ENCODE measurements at regions of chr9 and their contacts with region 1.

Region 1: DNA sequence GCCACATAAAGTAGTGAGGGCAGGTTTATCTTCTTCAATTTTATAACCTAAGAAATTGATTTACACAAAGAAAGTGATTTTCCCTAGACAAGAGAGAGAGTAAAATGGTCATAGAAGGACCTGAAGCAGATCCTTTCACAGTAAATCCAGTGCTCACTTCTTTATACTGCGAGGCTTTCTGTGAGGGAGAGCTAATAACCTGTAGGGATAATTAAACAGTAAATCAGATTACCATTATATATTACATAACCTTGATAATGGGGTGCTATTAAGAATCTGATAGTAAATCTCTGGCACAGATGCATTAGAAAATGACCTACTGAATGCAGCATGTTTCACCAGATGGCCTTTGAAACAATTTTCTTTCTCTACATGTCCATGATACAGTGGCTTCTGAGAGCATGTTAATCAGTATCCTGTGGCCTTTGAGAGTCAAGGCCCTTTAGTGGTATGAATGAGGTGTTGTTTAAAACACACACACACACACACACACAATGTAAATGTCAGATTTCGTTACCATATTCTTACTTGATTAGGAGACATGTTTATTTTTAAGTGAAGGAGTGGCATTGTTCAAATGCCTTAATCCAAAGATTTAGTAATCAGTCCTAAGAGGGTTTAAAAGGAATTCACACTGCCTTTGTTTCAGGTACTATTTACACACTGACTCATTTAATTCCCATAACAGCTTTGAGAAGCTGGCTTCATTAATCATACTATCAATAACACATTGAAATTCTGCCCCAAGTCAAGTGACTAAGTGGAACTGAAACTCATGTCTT is 124.7 kb downstream of the ALDH1A1 start:
- DNase-seq: no peak
- ATAC-seq: no peak
- H3K4me3 ChIP-seq: no peak overlapping the region
- H3K27ac ChIP-seq: no peak overlapping the region
- H3K4me1 ChIP-seq: no peaks in the 10 kb centered on the region
- H3K27me3 ChIP-seq: no peaks in the 10 kb centered on the region

Region 2: DNA sequence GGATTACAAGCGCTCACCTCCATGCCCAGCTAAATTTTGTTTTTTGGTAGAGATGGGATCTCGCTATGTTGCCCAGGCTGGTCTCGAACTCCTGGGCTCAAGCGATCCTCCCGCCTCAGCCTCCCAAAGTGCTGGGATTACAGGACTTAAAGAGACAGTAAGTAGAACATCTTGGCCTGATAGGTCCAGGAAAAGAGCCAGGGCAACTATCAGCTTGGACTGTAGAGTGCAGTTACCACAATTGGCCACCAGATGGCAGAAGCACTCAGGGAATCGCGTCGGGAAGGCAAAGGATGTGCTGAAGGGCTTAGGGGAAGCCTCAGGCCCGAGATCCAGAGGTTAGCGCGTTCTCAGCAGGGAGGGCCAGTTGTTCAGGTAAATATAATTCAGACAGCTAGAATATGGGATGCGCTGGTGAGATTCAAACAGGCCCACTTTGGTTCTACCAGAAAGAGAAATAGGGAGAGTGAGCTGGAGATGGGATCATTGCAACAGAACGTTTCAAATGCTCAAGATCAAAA is 789.2 kb before region 1 on chr9:
- intact Hi-C with region 1: loop called in 1 of 4 experiments (anchors 10 kb)
- DNase-seq: peak; percentile 63 to 83 (median 82)
- ATAC-seq: peak; percentile 85 to 89
- H3K4me3 ChIP-seq: no peak overlapping the region
- H3K27ac ChIP-seq: no peak overlapping the region
- H3K4me1 ChIP-seq: peaks cover 2% of the 10 kb centered on the region
- H3K27me3 ChIP-seq: no peaks in the 10 kb centered on the region

Region 3: GRCh38 chr9:72280913-72281500 is 547.1 kb before region 1 on chr9:
- intact Hi-C with region 1: loop called in 1 of 4 experiments (anchors 2 kb)
- DNase-seq: peak; percentile 66 to 84 (median 81)
- ATAC-seq: peak; percentile 86 to 88
- H3K4me3 ChIP-seq: no peak overlapping the region
- H3K27ac ChIP-seq: no peak overlapping the region
- H3K4me1 ChIP-seq: no peaks in the 10 kb centered on the region
- H3K27me3 ChIP-seq: no peaks in the 10 kb centered on the region

Region 4: GRCh38 chr9:72292256-72292682 is 535.9 kb before region 1 on chr9:
- intact Hi-C with region 1: loop called in 2 of 4 experiments (anchors 5 to 10 kb)
- DNase-seq: no peak
- ATAC-seq: peak; percentile 41 to 48
- H3K4me3 ChIP-seq: no peak overlapping the region
- H3K27ac ChIP-seq: no peak overlapping the region
- H3K4me1 ChIP-seq: no peaks in the 10 kb centered on the region
- H3K27me3 ChIP-seq: no peaks in the 10 kb centered on the region

Region 5: DNA sequence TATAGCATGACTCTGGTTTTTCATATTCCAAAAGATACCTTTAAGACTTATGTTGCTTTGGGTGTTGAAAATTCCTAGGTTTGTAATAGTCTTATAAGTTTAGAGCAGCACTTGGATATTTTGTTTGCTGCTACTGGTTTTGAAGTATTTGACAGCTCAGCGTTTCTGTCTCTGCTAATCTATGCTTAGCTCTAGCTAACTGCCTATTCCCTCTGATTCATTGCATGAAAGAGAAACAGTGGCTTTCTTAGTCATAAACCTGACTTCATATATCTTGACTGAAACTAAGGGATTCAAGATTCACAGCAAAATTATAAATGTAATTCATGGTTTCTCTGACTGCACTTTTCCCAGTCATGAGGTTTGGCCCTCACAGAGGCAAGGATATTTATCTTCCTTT is 287.9 kb after region 1 on chr9:
- intact Hi-C with region 1: no loop called
- DNase-seq: no peak
- ATAC-seq: no peak
- H3K4me3 ChIP-seq: no peak overlapping the region
- H3K27ac ChIP-seq: no peak overlapping the region
- H3K4me1 ChIP-seq: no peaks in the 10 kb centered on the region
- H3K27me3 ChIP-seq: no peaks in the 10 kb centered on the region

Region 6: GRCh38 chr9:73595036-73595545 is 767.0 kb after region 1 on chr9:
- intact Hi-C with region 1: no loop called
- DNase-seq: no peak
- ATAC-seq: no peak
- H3K4me3 ChIP-seq: no peak overlapping the region
- H3K27ac ChIP-seq: no peak overlapping the region
- H3K4me1 ChIP-seq: no peaks in the 10 kb centered on the region
- H3K27me3 ChIP-seq: no peaks in the 10 kb centered on the region

Measured in right cardiac atrium (tissue), 5 donors.